ENCODE measurements at regions of chr16 and their contacts with region 1.

Region 1: DNA sequence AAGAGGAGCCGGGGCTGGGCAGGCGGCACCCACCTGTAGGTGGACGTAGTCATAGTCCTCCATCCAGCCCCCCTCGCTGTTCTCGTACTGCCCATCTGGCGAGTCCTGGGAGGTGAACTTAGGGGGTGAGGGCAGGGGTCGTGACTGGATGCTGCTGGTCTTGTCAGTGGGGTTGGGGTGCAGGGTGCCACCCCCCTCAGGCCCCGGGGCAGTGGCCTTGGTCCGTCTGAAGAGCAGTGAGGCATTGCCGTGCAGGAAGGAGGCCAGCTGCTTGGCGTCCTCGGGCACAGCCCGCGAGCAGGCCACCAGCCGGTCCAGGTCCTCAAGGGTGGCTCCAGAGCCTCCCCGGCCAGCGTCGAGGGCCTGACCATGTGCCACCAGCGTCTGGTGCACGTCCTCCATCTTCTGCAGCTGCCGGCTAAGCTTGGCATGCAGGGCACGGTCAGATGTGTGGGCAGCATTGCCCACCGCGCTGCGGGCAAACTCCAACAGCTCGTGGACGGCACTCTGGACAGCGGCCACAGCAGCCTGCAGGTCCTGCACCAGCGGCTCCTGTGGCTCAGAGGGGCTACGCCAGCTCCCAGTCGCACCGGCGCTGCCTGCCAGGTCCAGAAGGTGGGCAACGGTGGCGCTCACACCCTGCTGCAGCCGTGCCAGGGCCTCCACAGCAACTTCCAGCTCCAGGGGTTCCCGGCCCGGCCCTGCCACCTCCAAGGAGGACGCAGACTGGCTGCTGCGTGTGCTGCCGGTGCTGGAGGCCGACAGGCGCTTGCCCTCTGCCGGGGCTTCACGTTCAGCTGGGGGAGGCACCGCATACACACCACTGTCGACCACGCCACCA is 16.3 kb downstream of the CTRB1 start:
- DNase-seq: no peak
- H3K4me3 ChIP-seq: no peak overlapping the region
- H3K27ac ChIP-seq: no peak overlapping the region
- H3K4me1 ChIP-seq: peaks cover 12% of the 10 kb centered on the region
- H3K27me3 ChIP-seq: no peaks in the 10 kb centered on the region
- CTCF ChIP-seq: no peak

Region 2: GRCh38 chr16:75317101-75317522 is 82.0 kb after region 1 on chr16:
- CTCF ChIA-PET with region 1: no interaction called
- POLR2A ChIA-PET with region 1: no interaction called
- intact Hi-C with region 1: no loop called
- DNase-seq: no peak
- H3K4me3 ChIP-seq: no peak overlapping the region
- H3K27ac ChIP-seq: no peak overlapping the region
- H3K4me1 ChIP-seq: peaks cover under 1% of the 10 kb centered on the region; the same call in 1 of the 2 replicates
- H3K27me3 ChIP-seq: no peaks in the 10 kb centered on the region
- CTCF ChIP-seq: no peak

Region 3: DNA sequence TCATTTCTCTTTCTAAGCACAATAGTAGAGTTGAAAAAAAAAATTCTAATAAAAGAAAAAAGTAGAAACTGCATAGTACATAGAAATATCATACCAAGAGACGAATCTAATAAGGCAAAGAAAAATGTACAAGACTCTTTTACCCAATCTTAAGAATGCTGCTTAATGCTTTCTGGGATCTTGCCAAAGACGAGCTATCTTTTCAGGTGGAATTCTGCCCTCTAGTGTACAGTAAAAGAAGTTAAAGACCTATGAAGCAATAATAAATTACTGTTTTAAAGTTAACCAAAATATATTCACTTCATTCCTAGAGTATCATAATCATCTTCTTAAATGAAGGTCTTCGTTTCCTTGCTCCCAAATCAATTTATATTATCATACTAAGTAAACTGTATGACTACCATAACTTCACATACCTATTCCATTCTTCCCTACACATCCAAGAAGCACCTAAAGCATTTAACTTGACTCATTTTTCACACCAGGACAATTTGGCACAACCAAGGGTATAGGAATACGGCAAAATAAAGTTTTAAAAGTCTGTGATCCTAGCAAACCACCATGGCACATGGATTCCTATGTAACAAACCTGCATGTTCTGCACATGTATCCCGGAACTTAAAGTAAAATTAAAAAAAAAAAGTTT is 150.6 kb after region 1 on chr16:
- CTCF ChIA-PET with region 1: interaction called, 29 read pairs
- POLR2A ChIA-PET with region 1: no interaction called
- intact Hi-C with region 1: loop called (anchors 1 kb)
- DNase-seq: peak in 1 of 2 experiments; percentile 64
- H3K4me3 ChIP-seq: no peak overlapping the region
- H3K27ac ChIP-seq: peak overlapping the region; percentile 20; the same call in 1 of the 2 replicates
- H3K4me1 ChIP-seq: peaks cover 6% of the 10 kb centered on the region
- H3K27me3 ChIP-seq: no peaks in the 10 kb centered on the region
- CTCF ChIP-seq: peak; percentile 87

Measured in PC-9 (cell line).